Posterior cingulate gyrus (tissue), 11 donors: ENCODE measurements at regions of chr5 and their contacts with region 1.

Region 1: DNA sequence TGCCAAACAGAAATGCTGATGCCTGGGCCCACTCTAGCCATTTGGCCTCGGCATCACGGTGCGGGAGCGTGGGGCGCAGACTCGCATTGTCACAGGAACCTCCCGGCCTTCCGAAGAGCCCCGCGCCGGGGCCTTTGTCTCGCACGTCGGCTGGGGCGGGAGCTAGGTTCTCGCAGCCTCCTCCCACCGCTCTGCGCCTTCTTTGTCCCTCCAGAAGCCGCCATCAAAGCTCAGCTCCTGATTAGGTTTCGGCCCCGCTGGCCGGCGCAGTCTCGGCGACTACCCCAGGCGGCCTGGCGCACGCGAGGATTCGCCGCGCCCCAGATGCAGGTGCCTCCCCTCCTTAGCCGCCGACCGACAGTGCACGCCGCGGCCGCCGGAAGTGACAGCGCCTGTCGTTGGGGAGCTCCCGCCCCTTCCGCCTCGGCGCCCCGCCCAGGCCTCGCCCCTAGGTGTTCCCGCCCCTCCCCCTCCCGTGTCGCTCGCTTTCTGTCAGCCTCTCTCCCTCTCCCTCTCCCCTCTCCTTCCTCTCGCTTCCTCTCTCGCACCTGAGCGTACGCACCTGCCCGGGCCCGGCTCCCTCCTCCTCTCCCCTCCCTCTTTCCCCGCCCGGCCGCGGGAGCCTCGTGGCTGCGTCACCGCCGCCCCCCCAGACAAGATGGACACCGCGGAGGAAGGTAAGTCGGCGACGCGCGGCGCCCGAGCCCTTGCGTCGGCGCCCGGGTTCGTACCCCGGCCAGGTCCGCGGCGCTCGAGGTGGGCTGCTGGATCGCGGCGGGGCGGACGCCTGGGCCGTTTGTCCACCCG is at the start of gene MARCHF6:
- DNase-seq: peak; percentile 86 to 99 (median 94)

Region 2: DNA sequence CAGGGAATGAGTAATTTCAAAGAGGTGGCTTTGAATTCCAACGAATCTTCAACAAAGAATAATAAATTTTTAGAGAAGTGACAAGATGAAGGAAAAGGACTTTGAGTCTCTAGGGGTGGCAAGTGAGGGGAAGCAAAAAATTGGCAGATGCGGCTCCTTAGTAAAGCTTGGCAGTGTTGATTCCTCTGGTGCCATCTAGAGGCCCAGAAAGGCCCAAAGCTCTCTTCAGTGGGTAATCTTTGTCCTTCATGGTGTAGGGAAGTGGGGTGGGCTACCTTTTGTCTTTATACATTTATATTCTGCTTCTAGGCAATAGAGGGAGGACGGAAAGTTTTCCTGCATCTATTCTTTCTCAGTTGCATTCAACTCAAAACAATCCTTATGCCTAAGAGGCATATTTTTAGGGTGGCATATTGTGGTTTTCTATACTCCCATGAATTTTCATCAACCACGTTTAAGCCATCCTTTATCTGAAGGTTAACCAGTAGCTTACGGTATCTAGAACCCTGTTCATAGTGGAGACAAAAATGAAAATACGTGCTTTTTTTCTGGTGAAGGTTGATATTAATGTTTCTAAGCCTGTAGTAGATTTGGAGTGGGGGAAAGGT is 70.8 kb after region 1 on chr5:
- intact Hi-C with region 1: loop called (anchors 5 kb)
- DNase-seq: peak in 6 of 10 donors; percentile 22 to 83 (median 48)